Panc1 (cell line): ENCODE measurements at regions of chrX and their contacts with region 1.

Region 1: DNA sequence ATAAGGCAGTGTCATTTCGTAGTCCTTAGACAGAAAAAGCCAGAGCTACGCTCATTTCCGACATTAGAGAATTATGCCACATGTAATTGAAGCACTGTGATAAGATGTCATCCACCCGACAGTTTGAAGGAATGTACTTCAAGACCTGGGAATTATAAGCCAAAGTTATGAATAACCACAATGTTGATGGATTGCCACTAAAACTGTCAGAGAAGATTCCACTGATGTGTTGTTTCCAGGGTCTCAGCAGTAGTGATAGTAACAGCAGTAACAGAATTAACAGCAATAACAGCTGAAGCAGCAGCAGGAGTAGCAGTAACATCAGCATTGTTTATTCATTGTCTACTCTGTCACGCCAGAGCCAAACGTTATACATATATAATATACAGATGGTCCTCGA is 24.7 kb downstream of the RAB33A start:
- DNase-seq: no peak
- ATAC-seq: no peak
- H3K4me3 ChIP-seq: no peak overlapping the region
- H3K27ac ChIP-seq: no peak overlapping the region
- H3K4me1 ChIP-seq: peaks cover 6% of the 10 kb centered on the region; the same call in 1 of the 2 replicates
- H3K27me3 ChIP-seq: no peaks in the 10 kb centered on the region
- CTCF ChIP-seq: no peak

Region 2: GRCh38 chrX:130009658-130010223 is 186.7 kb before region 1 on chrX:
- CTCF ChIA-PET with region 1: no interaction called
- POLR2A ChIA-PET with region 1: no interaction called
- in situ Hi-C with region 1: no loop called
- intact Hi-C with region 1: no loop called
- DNase-seq: no peak
- ATAC-seq: no peak
- H3K4me3 ChIP-seq: no peak overlapping the region
- H3K27ac ChIP-seq: no peak overlapping the region
- H3K4me1 ChIP-seq: no peaks in the 10 kb centered on the region
- H3K27me3 ChIP-seq: no peaks in the 10 kb centered on the region
- CTCF ChIP-seq: no peak

Region 3: GRCh38 chrX:130079824-130080406 is 116.6 kb before region 1 on chrX:
- CTCF ChIA-PET with region 1: interaction called, 7 read pairs
- POLR2A ChIA-PET with region 1: interaction called, 3 read pairs
- in situ Hi-C with region 1: no loop called
- intact Hi-C with region 1: loop called (anchors 2 kb)
- DNase-seq: peak; percentile 54
- ATAC-seq: peak; percentile 82
- H3K4me3 ChIP-seq: no peak overlapping the region
- H3K27ac ChIP-seq: no peak overlapping the region
- H3K4me1 ChIP-seq: peaks cover 26% of the 10 kb centered on the region
- H3K27me3 ChIP-seq: no peaks in the 10 kb centered on the region
- CTCF ChIP-seq: no peak

Region 4: GRCh38 chrX:130136497-130136896 is 60.0 kb before region 1 on chrX:
- CTCF ChIA-PET with region 1: no interaction called
- POLR2A ChIA-PET with region 1: interaction called, 14 read pairs
- in situ Hi-C with region 1: no loop called
- intact Hi-C with region 1: no loop called
- DNase-seq: no peak
- ATAC-seq: no peak
- H3K4me3 ChIP-seq: no peak overlapping the region
- H3K27ac ChIP-seq: no peak overlapping the region
- H3K4me1 ChIP-seq: no peaks in the 10 kb centered on the region
- H3K27me3 ChIP-seq: no peaks in the 10 kb centered on the region
- CTCF ChIP-seq: no peak